Posterior vena cava (tissue), 2 donors: ENCODE measurements at regions of chr3 and their contacts with region 1.

Region 1: GRCh38 chr3:11785024-11785377 is 61.7 kb downstream of the TAMM41 start:
- DNase-seq: no peak

Region 2: GRCh38 chr3:10173926-10174435 is 1611.0 kb before region 1 on chr3:
- intact Hi-C with region 1: loop called in 1 of 2 experiments (anchors 10 kb)
- DNase-seq: peak; percentile 93

Region 3: GRCh38 chr3:11523572-11524101 is 261.4 kb before region 1 on chr3:
- intact Hi-C with region 1: no loop called
- DNase-seq: no peak

Region 4: DNA sequence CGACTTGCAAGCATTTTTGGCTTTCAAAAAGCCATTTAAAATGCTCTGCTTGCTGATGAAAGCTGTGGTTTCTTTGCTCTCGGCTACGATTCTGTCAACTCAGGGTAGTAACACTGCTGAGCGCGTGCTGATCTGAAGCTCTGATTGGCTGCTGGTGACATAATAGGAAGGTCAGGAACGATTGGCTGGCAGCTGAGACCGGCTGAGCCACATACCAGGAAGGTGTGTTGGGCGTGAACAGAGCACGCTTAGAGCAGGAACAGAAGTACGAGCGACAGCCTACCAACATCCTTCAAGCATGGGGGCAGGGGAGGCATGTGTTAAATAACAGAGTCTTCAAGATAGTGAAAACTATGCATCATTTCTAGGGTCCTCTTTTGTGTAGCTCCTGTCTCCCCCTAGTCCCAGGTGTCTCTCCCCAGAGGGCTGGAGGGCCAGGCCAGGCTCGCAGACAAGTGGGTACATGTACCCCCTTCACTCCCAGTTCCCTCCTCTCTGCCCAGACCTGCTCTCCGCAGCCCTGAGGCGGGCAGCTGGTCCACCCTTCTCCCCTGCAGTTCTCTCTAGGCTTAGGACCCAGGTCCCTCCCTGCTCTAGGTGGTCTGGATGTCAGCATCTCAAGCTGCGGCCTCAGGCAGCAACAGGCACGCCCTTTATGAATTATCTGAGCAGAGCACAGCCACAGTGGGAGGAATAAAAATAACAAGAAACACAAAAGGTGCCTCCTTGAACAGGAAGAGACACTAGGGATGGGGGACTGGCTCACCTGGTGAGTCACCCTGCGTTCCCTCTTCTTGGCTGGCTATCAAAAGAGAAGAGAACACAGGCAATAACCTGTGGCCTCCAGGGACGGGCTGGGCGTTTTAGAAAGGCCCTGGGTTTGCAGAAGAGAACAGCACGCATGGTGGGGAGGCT is 14.3 kb before region 1 on chr3:
- intact Hi-C with region 1: no loop called
- DNase-seq: peak; percentile 83